ENCODE measurements at regions of chr2 and their contacts with region 1.

Region 1: DNA sequence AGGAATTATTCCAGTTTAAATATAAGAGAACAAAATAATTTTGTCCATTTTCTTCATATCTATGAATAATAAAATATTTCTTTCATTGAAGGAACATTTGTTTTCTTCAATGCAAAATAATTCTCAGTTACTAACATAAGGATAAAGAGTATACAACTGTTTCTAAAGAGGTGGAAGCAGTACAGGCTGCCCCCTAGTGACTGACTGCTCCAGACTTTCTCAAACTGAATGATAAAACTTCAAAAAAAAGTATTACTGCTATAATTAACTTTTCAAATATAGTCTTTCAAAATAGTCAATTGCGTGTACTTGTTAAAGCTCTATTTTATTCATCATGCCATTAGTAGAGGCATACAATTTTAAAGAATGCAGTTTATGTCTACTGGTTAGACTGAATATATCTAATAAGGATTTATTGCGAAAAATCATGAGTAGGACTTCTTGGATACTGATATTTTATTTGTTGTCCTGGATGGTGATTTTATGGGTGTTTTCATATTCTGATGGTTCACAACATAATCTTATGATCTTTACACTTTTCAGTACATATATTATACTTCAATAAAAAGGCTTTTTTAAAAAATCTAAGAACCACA is 100.1 kb downstream of the WDPCP start:
- DNase-seq: no peak
- ATAC-seq: no peak
- H3K4me3 Mint-ChIP-seq: no peak overlapping the region
- H3K27ac Mint-ChIP-seq: no peak overlapping the region
- H3K4me1 Mint-ChIP-seq: peaks cover 1% of the 10 kb centered on the region
- H3K27me3 Mint-ChIP-seq: no peaks in the 10 kb centered on the region
- CTCF ChIP-seq: no peak

Region 2: DNA sequence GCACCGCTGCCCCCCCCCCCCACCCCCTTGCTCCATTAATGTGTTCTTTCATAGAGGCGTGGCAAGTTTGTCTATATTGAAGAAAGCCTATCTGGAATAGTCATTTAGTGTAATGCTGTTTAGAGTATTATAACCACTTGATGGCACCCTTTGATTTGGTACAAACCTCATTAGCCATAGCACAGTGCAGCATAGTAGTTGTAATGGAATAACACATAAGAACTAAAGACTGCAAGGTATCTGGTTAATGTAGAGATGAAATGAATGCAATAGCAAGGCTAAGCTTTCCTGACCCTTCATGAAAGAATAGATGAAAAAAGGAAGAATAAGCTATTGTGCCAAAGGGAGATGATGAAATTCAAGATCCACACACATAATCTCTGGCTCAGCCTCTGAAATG is 700.8 kb before region 1 on chr2:
- CTCF ChIA-PET with region 1: interaction called, 5 read pairs
- POLR2A ChIA-PET with region 1: no interaction called
- intact Hi-C with region 1: loop called (anchors 5 kb)
- DNase-seq: no peak
- ATAC-seq: no peak
- H3K4me3 Mint-ChIP-seq: no peak overlapping the region
- H3K27ac Mint-ChIP-seq: no peak overlapping the region
- H3K4me1 Mint-ChIP-seq: no peaks in the 10 kb centered on the region
- H3K27me3 Mint-ChIP-seq: no peaks in the 10 kb centered on the region
- CTCF ChIP-seq: no peak

Region 3: GRCh38 chr2:63249146-63249545 is 239.1 kb before region 1 on chr2:
- CTCF ChIA-PET with region 1: no interaction called
- POLR2A ChIA-PET with region 1: no interaction called
- intact Hi-C with region 1: no loop called
- DNase-seq: no peak
- ATAC-seq: no peak
- H3K4me3 Mint-ChIP-seq: no peak overlapping the region
- H3K27ac Mint-ChIP-seq: no peak overlapping the region
- H3K4me1 Mint-ChIP-seq: no peaks in the 10 kb centered on the region
- H3K27me3 Mint-ChIP-seq: no peaks in the 10 kb centered on the region
- CTCF ChIP-seq: no peak

Measured in activated B cell treated with CpG ODN at 0.5 μM for 24 hours (primary cell).